AG04450 (cell line): ENCODE measurements at regions of chr4 and their contacts with region 1.

Region 1: GRCh38 chr4:47650584-47651130 is 165.6 kb downstream of the ATP10D start:
- DNase-seq: peak; percentile 8
- H3K4me3 ChIP-seq: no peak overlapping the region
- H3K27ac ChIP-seq: no peak overlapping the region
- H3K27me3 ChIP-seq: peaks cover 2% of the 10 kb centered on the region
- CTCF ChIP-seq: no peak

Region 2: GRCh38 chr4:47562297-47562696 is 88.4 kb before region 1 on chr4:
- CTCF ChIA-PET with region 1: no interaction called
- POLR2A ChIA-PET with region 1: no interaction called
- DNase-seq: no peak
- H3K4me3 ChIP-seq: no peak overlapping the region
- H3K27ac ChIP-seq: no peak overlapping the region
- H3K27me3 ChIP-seq: no peaks in the 10 kb centered on the region
- CTCF ChIP-seq: no peak

Region 3: GRCh38 chr4:47662975-47663374 is 12.3 kb after region 1 on chr4:
- CTCF ChIA-PET with region 1: interaction called, 10 read pairs
- POLR2A ChIA-PET with region 1: no interaction called
- DNase-seq: no peak
- H3K4me3 ChIP-seq: no peak overlapping the region
- H3K27ac ChIP-seq: no peak overlapping the region
- H3K27me3 ChIP-seq: no peaks in the 10 kb centered on the region
- CTCF ChIP-seq: peak; percentile 40